ENCODE measurements at regions of chr9 and their contacts with region 1.

Region 1: GRCh38 chr9:122318284-122318683 is 52.5 kb upstream of the PTGS1 start:
- DNase-seq: no peak
- CTCF ChIP-seq: no peak

Region 2: GRCh38 chr9:122264360-122265148 is 53.7 kb before region 1 on chr9 and contains the starts of genes MRRF and RBM18:
- CTCF ChIA-PET with region 1: no interaction called
- POLR2A ChIA-PET with region 1: interaction called, 11 read pairs
- DNase-seq: peak; percentile 93
- CTCF ChIP-seq: peak; percentile 0

Region 3: DNA sequence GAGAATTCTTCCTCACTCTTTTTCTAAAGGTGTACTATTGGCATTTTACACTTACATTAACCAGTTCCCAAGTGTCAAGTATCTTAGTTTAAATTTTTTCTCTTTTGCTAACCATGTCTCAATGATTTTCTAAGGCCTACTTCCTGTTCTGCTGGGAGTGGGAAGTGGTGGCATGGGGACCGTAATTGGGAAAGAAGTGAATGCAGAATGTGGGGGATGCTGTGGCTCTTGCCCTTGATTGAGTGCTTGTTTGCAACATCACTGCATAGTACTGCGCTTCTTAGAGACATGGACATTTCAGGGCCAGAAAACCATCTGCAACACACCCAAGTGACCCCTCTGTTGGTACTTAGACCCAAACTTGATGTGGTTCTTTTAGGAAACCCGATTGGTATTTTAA is 20.8 kb before region 1 on chr9:
- CTCF ChIA-PET with region 1: no interaction called
- POLR2A ChIA-PET with region 1: no interaction called
- DNase-seq: no peak
- CTCF ChIP-seq: no peak

Region 4: GRCh38 chr9:122333169-122333808 is 15.0 kb after region 1 on chr9:
- CTCF ChIA-PET with region 1: no interaction called
- POLR2A ChIA-PET with region 1: no interaction called
- DNase-seq: no peak
- CTCF ChIP-seq: no peak